ENCODE measurements at regions of chr15 and their contacts with region 1.

Region 1: DNA sequence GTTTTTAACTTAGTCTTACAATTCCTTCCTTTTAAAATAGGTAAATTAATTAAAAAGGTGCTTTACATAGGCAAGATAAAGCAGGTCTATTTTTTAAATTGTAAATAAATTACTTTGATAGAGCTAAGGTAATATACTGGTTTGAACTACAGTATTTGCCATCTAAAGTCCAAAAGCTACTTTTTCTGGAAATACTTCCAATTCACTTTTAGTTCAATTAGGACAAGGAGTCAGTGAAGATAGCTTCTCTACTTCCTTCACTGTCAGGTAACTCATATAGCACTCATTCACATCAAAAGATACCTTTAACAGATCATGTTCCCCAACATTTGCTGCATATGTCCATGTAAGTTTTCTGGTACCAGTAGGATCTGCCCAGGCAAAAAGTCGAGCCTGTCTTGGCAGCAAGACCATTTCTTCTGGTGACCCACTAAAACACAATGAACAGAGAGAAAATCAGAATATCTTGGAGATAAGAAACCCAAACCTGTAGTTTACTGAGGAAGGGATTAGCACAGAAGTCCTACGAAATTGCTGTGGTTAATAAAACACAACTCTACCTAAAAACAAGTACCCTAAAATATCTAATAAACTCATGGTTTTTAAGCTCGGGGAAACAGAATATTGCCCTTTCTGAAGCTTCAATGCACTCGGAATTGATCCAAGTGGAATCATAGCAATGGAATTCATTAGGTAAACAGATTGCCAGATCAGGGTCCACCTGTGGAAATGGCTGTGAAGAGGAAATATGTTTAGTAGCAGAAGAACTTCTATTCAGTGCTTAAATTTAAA is 153.1 kb downstream of the VPS13C start:
- DNase-seq: peak in 1 of 2 experiments; percentile 54
- H3K4me3 ChIP-seq: no peak overlapping the region
- H3K27ac ChIP-seq: 0 out of 2 replicates have a peak overlapping the region, but pooled peaks have one; percentile 11
- H3K4me1 ChIP-seq: 0 out of 2 replicates have a peak, but pooled peaks cover 4% of the 10 kb centered on the region
- H3K27me3 ChIP-seq: no peaks in the 10 kb centered on the region
- CTCF ChIP-seq: no peak

Region 2: DNA sequence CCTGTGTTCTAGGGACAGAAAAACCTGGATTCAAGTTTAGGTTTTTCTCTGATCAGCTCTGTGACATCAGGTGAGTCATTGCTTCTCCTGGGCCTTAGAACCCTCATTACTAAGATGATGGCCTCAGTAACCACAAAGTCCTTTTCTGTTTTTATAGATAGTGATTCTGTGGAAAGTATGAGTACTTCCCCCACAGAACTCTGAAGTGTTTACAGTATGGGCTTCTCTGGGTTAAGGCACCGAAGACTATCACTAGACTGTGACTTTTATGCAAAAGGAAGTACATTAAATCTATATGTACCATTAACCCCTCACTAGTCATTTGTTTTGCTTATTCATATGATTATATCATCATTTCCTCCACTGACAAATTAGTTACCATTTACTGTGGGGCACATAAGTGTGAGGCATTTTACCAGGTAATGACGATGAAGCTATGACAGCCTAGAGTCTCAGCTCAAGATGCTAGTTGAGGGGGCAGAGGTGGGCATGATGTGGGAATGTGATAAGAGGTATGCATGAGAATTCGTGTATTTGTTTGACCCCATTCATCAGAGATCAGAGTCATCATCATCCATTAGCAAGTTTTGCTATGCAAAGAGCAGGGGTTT is 663.1 kb before region 1 on chr15:
- CTCF ChIA-PET with region 1: no interaction called
- POLR2A ChIA-PET with region 1: interaction called, 10 read pairs
- intact Hi-C with region 1: no loop called
- DNase-seq: no peak
- H3K4me3 ChIP-seq: no peak overlapping the region
- H3K27ac ChIP-seq: no peak overlapping the region
- H3K4me1 ChIP-seq: no peaks in the 10 kb centered on the region
- H3K27me3 ChIP-seq: peaks cover 16% of the 10 kb centered on the region
- CTCF ChIP-seq: no peak

Region 3: GRCh38 chr15:61879219-61879618 is 27.9 kb before region 1 on chr15:
- CTCF ChIA-PET with region 1: no interaction called
- POLR2A ChIA-PET with region 1: no interaction called
- intact Hi-C with region 1: no loop called
- DNase-seq: peak; percentile 51 to 90
- H3K4me3 ChIP-seq: no peak overlapping the region
- H3K27ac ChIP-seq: peak overlapping the region; percentile 47
- H3K4me1 ChIP-seq: peaks cover 27% of the 10 kb centered on the region
- H3K27me3 ChIP-seq: no peaks in the 10 kb centered on the region
- CTCF ChIP-seq: no peak